IMR-90 (cell line): ENCODE measurements at regions of chr12 and their contacts with region 1.

Region 1: GRCh38 chr12:8780389-8780788 is 42.0 kb upstream of the A2ML1 start:
- DNase-seq: peak; percentile 44
- ATAC-seq: peak; percentile 66; the same call in 1 of the 2 replicates
- H3K4me3 ChIP-seq: no peak overlapping the region
- H3K27ac ChIP-seq: no peak overlapping the region
- H3K4me1 ChIP-seq: peaks cover 4% of the 10 kb centered on the region; the same call in 1 of the 2 replicates
- H3K27me3 ChIP-seq: no peaks in the 10 kb centered on the region
- CTCF ChIP-seq: peak; percentile 35
- POLR2A ChIP-seq: no peak
- RAD21 ChIP-seq: no peak

Region 2: GRCh38 chr12:8685051-8685450 is 95.3 kb before region 1 on chr12:
- CTCF ChIA-PET with region 1: no interaction called
- POLR2A ChIA-PET with region 1: no interaction called
- dilution Hi-C with region 1: no loop called
- in situ Hi-C with region 1: no loop called
- intact Hi-C with region 1: no loop called
- DNase-seq: no peak
- ATAC-seq: no peak
- H3K4me3 ChIP-seq: no peak overlapping the region
- H3K27ac ChIP-seq: no peak overlapping the region
- H3K4me1 ChIP-seq: no peaks in the 10 kb centered on the region
- H3K27me3 ChIP-seq: no peaks in the 10 kb centered on the region; the same call in 1 of the 2 replicates
- CTCF ChIP-seq: no peak
- POLR2A ChIP-seq: no peak
- RAD21 ChIP-seq: no peak

Region 3: GRCh38 chr12:8697476-8698131 is 82.8 kb before region 1 on chr12 and contains the start of gene RIMKLB:
- CTCF ChIA-PET with region 1: no interaction called
- POLR2A ChIA-PET with region 1: no interaction called
- dilution Hi-C with region 1: no loop called
- in situ Hi-C with region 1: no loop called
- intact Hi-C with region 1: loop called (anchors 5 kb)
- DNase-seq: peak; percentile 57
- ATAC-seq: peak; percentile 91
- H3K4me3 ChIP-seq: peak within 1 kb of the TSS; percentile 97
- H3K27ac ChIP-seq: peak within 1 kb of the TSS; percentile 77
- H3K4me1 ChIP-seq: no peaks in the 10 kb centered on the region
- H3K27me3 ChIP-seq: no peaks in the 10 kb centered on the region
- CTCF ChIP-seq: no peak
- POLR2A ChIP-seq: peak; percentile 46
- RAD21 ChIP-seq: no peak
- total RNA-seq, gene RIMKLB: 18.8 and 23.1 TPM in 2 replicates